ENCODE measurements at regions of chr17 and their contacts with region 1.

Region 1: GRCh38 chr17:68205251-68205807 is 42.5 kb upstream of the AMZ2 start:
- DNase-seq: peak; percentile 87
- ATAC-seq: peak; percentile 88 to 90
- H3K4me3 ChIP-seq: peak overlapping the region; percentile 74 to 87 (median 76)
- H3K27ac ChIP-seq: peak overlapping the region; percentile 66 to 91 (median 78)
- H3K4me1 ChIP-seq: peaks cover 10 to 14% of the 10 kb centered on the region in 2 donors
- H3K27me3 ChIP-seq: peaks cover 0 to 2% (median 0%) of the 10 kb centered on the region in 3 donors
- CTCF ChIP-seq: peak; percentile 75 to 94 (median 90)
- POLR2A ChIP-seq: peak; percentile 61 to 68

Region 2: DNA sequence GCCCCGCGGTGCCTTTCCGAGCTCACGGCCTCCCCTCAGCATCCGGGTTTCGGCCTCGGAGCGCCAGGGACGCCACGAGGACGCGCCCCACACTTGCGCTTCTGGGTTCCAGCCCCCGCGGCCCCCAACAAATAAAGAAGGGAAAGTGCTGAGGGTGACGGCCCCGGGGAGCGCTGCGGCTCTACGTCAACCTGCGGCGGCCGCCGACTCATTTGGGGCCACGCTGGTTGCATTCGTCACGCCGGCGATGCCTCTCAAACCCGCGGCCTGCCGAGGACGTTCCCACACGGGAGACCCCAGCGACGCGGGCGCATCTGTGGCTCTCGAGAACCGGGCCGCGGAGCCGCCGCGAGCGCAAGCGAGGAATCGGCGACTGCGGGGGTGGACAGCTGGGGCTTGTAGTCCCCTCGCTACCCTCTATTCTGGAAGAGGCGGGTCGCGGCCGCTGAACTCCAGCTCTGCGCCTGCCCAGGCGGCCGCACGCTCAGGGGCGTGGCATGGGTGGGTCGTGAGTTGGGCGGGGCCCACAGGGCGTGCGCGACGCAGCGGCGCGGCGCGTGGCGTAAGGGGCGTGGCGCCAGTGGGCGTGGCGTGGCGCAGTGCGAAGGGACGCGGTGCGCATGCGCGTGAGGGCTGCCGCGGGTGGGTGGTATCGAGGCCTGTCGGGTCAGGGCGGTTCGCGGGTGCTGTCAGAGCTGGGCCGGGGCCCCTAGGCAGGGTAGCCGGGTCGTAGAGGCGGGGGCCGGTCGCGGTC is 42.3 kb after region 1 on chr17 and contains the start of gene AMZ2:
- in situ Hi-C with region 1: no loop called
- intact Hi-C with region 1: loop called (anchors 5 kb)
- DNase-seq: peak; percentile 84 to 92
- ATAC-seq: peak; percentile 91
- H3K4me3 ChIP-seq: peak within 1 kb of the TSS; percentile 81 to 97 (median 96)
- H3K27ac ChIP-seq: peak within 1 kb of the TSS; percentile 89 to 100 (median 98)
- H3K4me1 ChIP-seq: peaks cover 12 to 14% of the 10 kb centered on the region in 2 donors
- H3K27me3 ChIP-seq: no peaks in the 10 kb centered on the region
- CTCF ChIP-seq: peak in 1 of 5 experiments; percentile 12
- POLR2A ChIP-seq: peak; percentile 97 to 98
- total RNA-seq, gene AMZ2: 47.6 to 86.9 (median 61.8) TPM

Region 3: GRCh38 chr17:68327823-68328570 is 122.7 kb after region 1 on chr17:
- in situ Hi-C with region 1: no loop called
- intact Hi-C with region 1: no loop called
- DNase-seq: no peak
- ATAC-seq: no peak
- H3K4me3 ChIP-seq: no peak overlapping the region
- H3K27ac ChIP-seq: peak overlapping the region in 1 of 4 donors; percentile 99
- H3K4me1 ChIP-seq: peaks cover 20 to 24% of the 10 kb centered on the region in 2 donors
- H3K27me3 ChIP-seq: no peaks in the 10 kb centered on the region
- CTCF ChIP-seq: peak in 1 of 5 experiments; percentile 18
- POLR2A ChIP-seq: no peak

Measured in gastrocnemius medialis (tissue), 4 donors.